Activated T-helper 1 cell treated with anti-CD3 and anti-CD28 coated beads, Interleukin-12 subunit alpha, Interleukin-12 subunit beta, Interleukin-2, Interleukin-4 antibody, amounts not matched to agents 30 ng/mL and 10 ng/mL and 1 ng/mL, durations not matched to agents 14 hours and 24 hours and 36 hours (primary cell): ENCODE measurements at regions of chr4 and their contacts with region 1.

Region 1: GRCh38 chr4:83231620-83232076 is 53.0 kb downstream of the COQ2 start:
- DNase-seq: peak; percentile 63
- H3K4me3 Mint-ChIP-seq: peak overlapping the region; percentile 52
- H3K27ac Mint-ChIP-seq: peak overlapping the region; percentile 69
- H3K4me1 Mint-ChIP-seq: peaks cover 59% of the 10 kb centered on the region
- H3K27me3 Mint-ChIP-seq: peaks cover 11% of the 10 kb centered on the region

Region 2: GRCh38 chr4:83074086-83074704 is 157.5 kb before region 1 on chr4:
- intact Hi-C with region 1: loop called (anchors 1 kb)
- DNase-seq: peak; percentile 66
- H3K4me3 Mint-ChIP-seq: no peak overlapping the region
- H3K27ac Mint-ChIP-seq: peak overlapping the region; percentile 19
- H3K4me1 Mint-ChIP-seq: peaks cover 29% of the 10 kb centered on the region
- H3K27me3 Mint-ChIP-seq: no peaks in the 10 kb centered on the region

Region 3: GRCh38 chr4:83128240-83128929 is 103.3 kb before region 1 on chr4:
- intact Hi-C with region 1: loop called (anchors 1 kb)
- DNase-seq: no peak
- H3K4me3 Mint-ChIP-seq: no peak overlapping the region
- H3K27ac Mint-ChIP-seq: no peak overlapping the region
- H3K4me1 Mint-ChIP-seq: peaks cover 28% of the 10 kb centered on the region
- H3K27me3 Mint-ChIP-seq: peaks cover 5% of the 10 kb centered on the region

Region 4: DNA sequence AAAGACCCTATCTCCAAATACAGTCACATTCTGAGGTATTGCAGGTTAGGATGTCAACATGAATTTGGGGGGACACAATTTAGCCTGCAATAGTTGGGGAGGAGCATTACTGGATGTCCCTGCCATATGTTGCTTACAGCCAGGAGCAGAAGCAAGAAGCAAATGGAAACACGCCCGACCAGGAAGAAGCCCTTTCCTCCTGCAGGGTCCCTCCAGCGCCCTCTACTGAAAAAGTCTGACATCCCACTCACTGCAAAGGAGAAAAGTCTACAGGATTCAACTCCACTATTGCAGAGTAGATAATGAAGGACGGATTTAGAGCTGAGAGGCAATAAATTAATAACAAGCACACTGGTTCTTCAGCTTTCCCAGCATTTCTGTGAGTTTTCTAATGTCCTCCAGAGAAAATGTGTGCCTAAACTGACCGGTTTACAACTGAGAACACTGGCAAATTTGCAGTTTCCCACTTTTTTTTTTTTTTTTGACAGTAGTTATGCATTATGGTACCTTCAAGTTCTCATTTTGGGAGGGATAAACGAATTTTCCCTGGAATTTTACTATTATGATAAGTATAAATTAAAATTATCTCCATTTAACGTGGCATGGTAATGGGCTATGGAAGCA is 21.2 kb after region 1 on chr4:
- intact Hi-C with region 1: loop called (anchors 1 kb)
- DNase-seq: peak; percentile 62
- H3K4me3 Mint-ChIP-seq: no peak overlapping the region
- H3K27ac Mint-ChIP-seq: no peak overlapping the region
- H3K4me1 Mint-ChIP-seq: peaks cover 37% of the 10 kb centered on the region
- H3K27me3 Mint-ChIP-seq: peaks cover 7% of the 10 kb centered on the region

Region 5: DNA sequence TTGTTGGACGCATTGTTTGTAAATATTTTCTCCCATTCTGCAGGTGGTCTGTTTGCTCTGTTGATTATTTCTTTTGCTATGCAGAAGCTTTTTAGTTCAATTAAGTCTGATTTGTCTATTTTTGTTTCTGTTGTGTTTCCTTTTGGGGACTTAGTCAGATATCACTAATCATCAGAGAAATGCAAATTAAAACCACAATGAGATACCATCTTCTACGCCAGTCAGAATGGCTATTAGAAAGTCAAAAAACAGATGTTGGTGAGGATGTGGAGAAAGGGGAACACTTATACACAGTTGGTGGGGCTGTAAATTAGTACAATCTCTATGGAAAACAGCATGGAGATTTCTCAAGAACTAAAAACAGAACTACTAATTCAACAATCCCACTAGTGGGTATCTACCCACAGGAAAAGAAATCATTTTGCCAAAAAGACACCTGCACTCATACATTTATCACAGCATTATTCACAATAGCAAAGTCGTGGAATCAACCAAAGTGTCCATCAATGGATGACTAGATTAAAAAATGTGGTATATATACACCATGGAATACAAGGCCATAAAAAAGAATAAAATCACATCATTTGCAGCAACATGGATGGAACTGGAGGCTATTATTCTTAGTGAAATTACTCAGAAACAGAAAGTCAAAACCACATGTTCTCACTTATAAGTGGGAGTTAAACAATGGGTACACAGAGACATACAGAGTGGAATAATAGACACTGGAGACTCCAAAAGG is 44.8 kb after region 1 on chr4:
- intact Hi-C with region 1: loop called (anchors 2 kb)
- DNase-seq: no peak
- H3K4me3 Mint-ChIP-seq: no peak overlapping the region
- H3K27ac Mint-ChIP-seq: peak overlapping the region; percentile 79
- H3K4me1 Mint-ChIP-seq: peaks cover 30% of the 10 kb centered on the region
- H3K27me3 Mint-ChIP-seq: peaks cover 2% of the 10 kb centered on the region

Region 6: GRCh38 chr4:83340692-83341343 is 109.2 kb after region 1 on chr4:
- intact Hi-C with region 1: loop called (anchors 2 kb)
- DNase-seq: peak; percentile 48
- H3K4me3 Mint-ChIP-seq: peak overlapping the region; percentile 23
- H3K27ac Mint-ChIP-seq: peak overlapping the region; percentile 98
- H3K4me1 Mint-ChIP-seq: peaks cover 30% of the 10 kb centered on the region
- H3K27me3 Mint-ChIP-seq: peaks cover 26% of the 10 kb centered on the region

Region 7: DNA sequence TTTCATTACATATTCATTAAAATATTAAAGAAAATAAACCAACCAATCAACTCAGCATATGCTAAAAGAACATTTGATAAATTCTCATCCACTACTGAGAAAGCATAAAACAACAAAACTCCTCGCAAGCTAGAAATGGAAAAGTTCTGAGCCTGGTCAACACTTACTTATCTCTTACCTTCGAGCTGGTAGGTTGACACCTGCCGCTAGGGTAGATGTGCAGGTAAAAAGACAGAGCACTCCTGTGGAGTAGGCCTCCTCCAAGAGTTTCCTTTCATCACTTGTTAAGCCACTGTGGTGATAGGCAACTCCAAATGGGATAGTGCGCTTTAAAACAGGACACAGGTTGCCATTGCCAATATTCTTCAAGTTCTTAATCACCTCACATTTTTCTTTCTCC is 205.0 kb after region 1 on chr4:
- intact Hi-C with region 1: no loop called
- DNase-seq: no peak
- H3K4me3 Mint-ChIP-seq: no peak overlapping the region
- H3K27ac Mint-ChIP-seq: no peak overlapping the region
- H3K4me1 Mint-ChIP-seq: no peaks in the 10 kb centered on the region
- H3K27me3 Mint-ChIP-seq: no peaks in the 10 kb centered on the region